ENCODE measurements at regions of chr3 and their contacts with region 1.

Region 1: DNA sequence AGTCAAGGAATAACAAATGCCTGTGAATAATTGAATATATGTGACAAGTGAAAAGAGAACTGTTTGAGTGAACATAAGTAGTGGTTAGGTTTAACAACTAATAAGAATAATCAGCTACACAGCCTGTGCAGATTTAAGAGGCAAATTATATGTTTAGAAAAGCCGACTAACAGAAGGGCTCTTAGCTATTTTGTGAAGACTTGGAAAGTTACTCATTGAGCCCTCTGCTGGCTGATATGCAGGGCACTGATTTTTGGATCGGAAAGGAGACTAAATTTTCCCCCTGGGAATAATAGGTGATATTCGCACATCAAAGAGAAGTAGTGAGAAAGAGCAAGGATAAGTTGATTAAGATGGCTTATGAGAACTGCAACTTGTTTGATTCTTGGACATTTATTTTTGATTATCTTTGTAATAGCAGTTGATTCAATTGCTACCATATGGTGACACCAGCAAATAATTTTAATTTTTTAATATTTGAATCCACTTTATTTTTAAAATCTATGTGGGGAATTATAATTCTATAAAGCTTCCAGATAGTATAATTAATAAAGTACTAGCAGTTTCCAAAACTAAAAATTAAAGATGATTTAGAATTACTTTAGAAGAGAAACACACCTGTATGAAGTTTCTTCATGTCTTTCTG is 156.2 kb downstream of the NLGN1 start:
- DNase-seq: peak; percentile 31
- ATAC-seq: peak; percentile 62
- H3K4me3 ChIP-seq: no peak overlapping the region
- H3K27ac ChIP-seq: no peak overlapping the region
- H3K4me1 ChIP-seq: peaks cover 0 to 5% of the 10 kb centered on the region in 2 experiments; a peak in 1 of 4 replicates
- H3K27me3 ChIP-seq: no peaks in the 10 kb centered on the region
- CTCF ChIP-seq: peak; percentile 53 to 78 (median 78); a peak in 5 of 6 replicates
- POLR2A ChIP-seq: no peak
- RAD21 ChIP-seq: peak; percentile 43

Region 2: GRCh38 chr3:172771672-172772071 is 782.1 kb before region 1 on chr3:
- CTCF ChIA-PET with region 1: no interaction called
- POLR2A ChIA-PET with region 1: no interaction called
- RAD21 ChIA-PET with region 1: no interaction called
- intact Hi-C with region 1: no loop called
- DNase-seq: no peak
- ATAC-seq: no peak
- H3K4me3 ChIP-seq: no peak overlapping the region
- H3K27ac ChIP-seq: no peak overlapping the region
- H3K4me1 ChIP-seq: no peaks in the 10 kb centered on the region
- H3K27me3 ChIP-seq: no peaks in the 10 kb centered on the region
- CTCF ChIP-seq: no peak
- POLR2A ChIP-seq: no peak
- RAD21 ChIP-seq: no peak

Region 3: GRCh38 chr3:172808969-172809546 is 744.7 kb before region 1 on chr3:
- CTCF ChIA-PET with region 1: no interaction called
- POLR2A ChIA-PET with region 1: no interaction called
- RAD21 ChIA-PET with region 1: no interaction called
- intact Hi-C with region 1: loop called (anchors 10 kb)
- DNase-seq: peak; percentile 21
- ATAC-seq: peak; percentile 53; the same call in 1 of the 2 replicates
- H3K4me3 ChIP-seq: no peak overlapping the region
- H3K27ac ChIP-seq: no peak overlapping the region
- H3K4me1 ChIP-seq: no peaks in the 10 kb centered on the region
- H3K27me3 ChIP-seq: no peaks in the 10 kb centered on the region
- CTCF ChIP-seq: peak; percentile 16 to 55 (median 24); a peak in 3 of 6 replicates
- POLR2A ChIP-seq: no peak
- RAD21 ChIP-seq: peak; percentile 42

Region 4: GRCh38 chr3:173221010-173221409 is 332.7 kb before region 1 on chr3:
- CTCF ChIA-PET with region 1: interaction called, 4 read pairs
- POLR2A ChIA-PET with region 1: no interaction called
- RAD21 ChIA-PET with region 1: no interaction called
- intact Hi-C with region 1: loop called (anchors 2 kb)
- DNase-seq: peak; percentile 24
- ATAC-seq: peak; percentile 82
- H3K4me3 ChIP-seq: no peak overlapping the region
- H3K27ac ChIP-seq: no peak overlapping the region
- H3K4me1 ChIP-seq: no peaks in the 10 kb centered on the region
- H3K27me3 ChIP-seq: no peaks in the 10 kb centered on the region
- CTCF ChIP-seq: peak; percentile 58 to 72 (median 71)
- POLR2A ChIP-seq: no peak
- RAD21 ChIP-seq: peak; percentile 71

Region 5: GRCh38 chr3:173411375-173411973 is 142.3 kb before region 1 on chr3:
- CTCF ChIA-PET with region 1: interaction called, 7 read pairs
- POLR2A ChIA-PET with region 1: no interaction called
- RAD21 ChIA-PET with region 1: no interaction called
- intact Hi-C with region 1: loop called (anchors 1 kb)
- DNase-seq: peak; percentile 32
- ATAC-seq: peak; percentile 70
- H3K4me3 ChIP-seq: no peak overlapping the region
- H3K27ac ChIP-seq: no peak overlapping the region
- H3K4me1 ChIP-seq: no peaks in the 10 kb centered on the region
- H3K27me3 ChIP-seq: no peaks in the 10 kb centered on the region
- CTCF ChIP-seq: peak; percentile 42 to 62 (median 57); a peak in 5 of 6 replicates
- POLR2A ChIP-seq: no peak
- RAD21 ChIP-seq: peak; percentile 79

Region 6: DNA sequence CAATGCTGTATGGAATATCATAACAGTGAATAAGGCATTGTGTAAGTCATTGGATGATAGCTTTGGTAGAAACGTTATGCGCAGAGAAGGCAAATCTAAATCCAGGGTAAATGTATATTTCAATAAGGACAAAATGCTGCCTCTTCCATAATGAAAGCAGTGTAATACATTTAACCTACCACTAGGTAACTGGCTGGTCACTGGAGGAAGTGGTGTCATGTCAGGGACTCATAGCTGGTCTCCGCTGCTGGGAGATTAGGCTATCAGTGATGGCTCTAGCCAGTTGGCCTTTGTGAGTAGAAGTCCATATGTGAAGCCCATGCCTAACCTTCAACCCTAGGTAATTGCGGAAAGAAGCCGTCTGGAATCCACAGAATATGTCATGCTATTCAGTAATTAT is 15.3 kb before region 1 on chr3:
- CTCF ChIA-PET with region 1: interaction called, 10 read pairs
- POLR2A ChIA-PET with region 1: no interaction called
- RAD21 ChIA-PET with region 1: no interaction called
- intact Hi-C with region 1: no loop called
- DNase-seq: no peak
- ATAC-seq: no peak; the same call in 1 of the 2 replicates
- H3K4me3 ChIP-seq: no peak overlapping the region
- H3K27ac ChIP-seq: no peak overlapping the region
- H3K4me1 ChIP-seq: no peaks in the 10 kb centered on the region
- H3K27me3 ChIP-seq: no peaks in the 10 kb centered on the region
- CTCF ChIP-seq: peak in 2 of 3 experiments; percentile 34 to 41; a peak in 3 of 6 replicates
- POLR2A ChIP-seq: no peak
- RAD21 ChIP-seq: no peak

Region 7: DNA sequence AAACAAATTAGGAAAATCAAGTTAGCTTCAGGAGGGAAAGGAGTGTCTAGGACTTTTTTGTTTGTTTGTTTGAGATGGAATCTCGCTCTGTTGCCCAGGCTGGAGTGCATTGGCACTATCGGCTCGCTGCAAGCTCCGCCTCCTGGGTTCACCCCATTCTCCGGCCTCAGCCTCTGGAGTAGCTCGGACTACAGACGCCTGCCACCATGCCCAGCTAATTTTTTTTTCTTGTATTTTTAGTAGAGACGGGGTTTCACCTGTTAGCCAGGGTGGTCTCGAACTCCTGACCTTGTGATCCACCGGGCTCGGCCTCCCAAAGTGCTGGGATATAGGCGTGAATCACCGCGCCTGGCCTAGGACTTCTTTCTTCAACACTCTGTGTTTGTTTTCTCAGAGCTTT is 14.9 kb after region 1 on chr3:
- CTCF ChIA-PET with region 1: interaction called, 4 read pairs
- POLR2A ChIA-PET with region 1: no interaction called
- RAD21 ChIA-PET with region 1: no interaction called
- intact Hi-C with region 1: loop called (anchors 1 kb)
- DNase-seq: no peak
- ATAC-seq: no peak
- H3K4me3 ChIP-seq: no peak overlapping the region
- H3K27ac ChIP-seq: no peak overlapping the region
- H3K4me1 ChIP-seq: no peaks in the 10 kb centered on the region
- H3K27me3 ChIP-seq: no peaks in the 10 kb centered on the region
- CTCF ChIP-seq: no peak
- POLR2A ChIP-seq: no peak
- RAD21 ChIP-seq: no peak

Region 8: DNA sequence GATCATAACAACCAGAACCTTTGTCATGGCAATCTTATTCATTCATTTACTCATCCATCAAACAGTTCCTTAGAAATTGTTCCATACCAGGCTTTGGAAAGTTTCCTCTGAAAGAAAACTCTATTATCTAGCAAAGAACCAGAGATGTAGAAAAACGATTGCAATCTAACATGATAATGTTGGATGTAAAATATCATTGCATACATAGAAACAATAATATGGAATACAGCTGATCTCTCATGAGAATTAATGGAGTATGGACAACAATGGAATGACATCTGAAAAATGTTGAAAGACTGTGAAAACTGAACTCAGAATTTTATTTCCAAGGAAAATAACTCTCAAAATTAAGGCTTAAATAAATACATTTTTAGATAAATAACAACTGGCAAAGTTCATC is 509.2 kb after region 1 on chr3:
- CTCF ChIA-PET with region 1: no interaction called
- POLR2A ChIA-PET with region 1: no interaction called
- RAD21 ChIA-PET with region 1: no interaction called
- intact Hi-C with region 1: no loop called
- DNase-seq: no peak
- ATAC-seq: no peak
- H3K4me3 ChIP-seq: no peak overlapping the region
- H3K27ac ChIP-seq: no peak overlapping the region
- H3K4me1 ChIP-seq: no peaks in the 10 kb centered on the region
- H3K27me3 ChIP-seq: no peaks in the 10 kb centered on the region
- CTCF ChIP-seq: no peak
- POLR2A ChIP-seq: no peak
- RAD21 ChIP-seq: no peak

Measured in HCT116 (cell line).